ENCODE measurements at regions of chr19 and their contacts with region 1.

Region 1: DNA sequence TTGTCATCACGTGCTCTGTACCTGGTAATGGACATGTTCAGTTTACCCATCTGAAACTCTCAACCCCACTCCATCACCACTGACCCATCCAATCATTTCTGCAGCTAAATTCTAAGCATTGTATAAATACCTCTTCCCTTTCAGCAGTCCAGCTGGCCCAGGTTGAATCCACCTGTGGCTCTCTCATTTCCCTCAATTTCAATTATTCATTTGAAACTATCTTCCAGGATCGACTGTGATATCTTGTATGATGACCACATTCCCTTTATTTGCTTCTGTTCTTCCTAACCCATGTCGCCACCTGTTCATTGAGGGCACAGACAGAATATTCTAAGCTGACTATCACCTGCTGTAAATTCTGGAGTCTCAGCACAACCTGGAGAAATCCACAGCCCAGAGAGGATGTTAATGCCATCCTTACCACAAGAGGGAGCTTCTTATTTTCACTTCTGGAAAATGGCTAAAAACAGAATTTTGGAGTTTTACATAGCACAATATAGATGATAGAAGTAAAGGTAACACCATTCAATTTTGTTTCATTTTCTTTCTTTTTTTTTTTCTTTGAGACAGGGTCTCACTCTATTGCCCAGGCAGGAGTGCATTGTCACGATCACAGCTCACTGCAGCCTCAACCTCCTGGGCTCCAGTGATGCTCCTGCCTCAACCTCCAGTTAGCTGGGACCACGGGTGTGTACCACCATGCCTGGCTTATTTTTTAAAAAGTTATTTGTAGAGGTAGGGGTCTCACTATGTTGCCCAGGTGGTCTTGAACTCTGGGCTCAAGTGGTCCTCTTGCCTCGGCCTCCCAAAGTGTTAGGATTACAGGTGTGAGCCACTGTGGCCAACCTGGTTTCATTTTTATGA is 38.6 kb downstream of the ZNF823 start:
- DNase-seq: peak; percentile 12 to 43
- H3K4me3 ChIP-seq: no peak overlapping the region
- H3K27ac ChIP-seq: no peak overlapping the region
- H3K4me1 ChIP-seq: 0 out of 2 replicates have a peak, but pooled peaks cover 1% of the 10 kb centered on the region
- H3K27me3 ChIP-seq: no peaks in the 10 kb centered on the region
- CTCF ChIP-seq: peak; percentile 92

Region 2: DNA sequence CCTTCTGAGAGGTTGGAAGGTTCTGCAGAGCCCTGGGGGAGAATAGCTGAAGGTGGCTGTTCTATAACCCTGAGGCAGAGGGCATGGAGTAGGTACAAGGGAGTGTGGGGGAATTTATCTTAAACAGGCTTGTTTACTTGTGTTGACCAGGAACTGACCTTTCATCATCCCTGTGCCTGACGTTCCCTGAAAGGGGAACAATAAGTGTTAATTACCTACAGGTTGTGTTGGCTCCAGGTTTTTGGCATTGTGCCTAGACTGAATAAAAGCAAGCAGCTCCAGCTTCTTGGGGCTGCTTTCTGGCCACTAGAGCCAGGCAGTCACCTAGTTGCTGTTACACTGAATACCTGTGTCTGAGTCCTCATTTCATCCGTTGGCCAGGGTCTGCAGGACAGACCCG is 42.9 kb before region 1 on chr19:
- CTCF ChIA-PET with region 1: no interaction called
- POLR2A ChIA-PET with region 1: no interaction called
- intact Hi-C with region 1: no loop called
- DNase-seq: peak; percentile 11 to 67
- H3K4me3 ChIP-seq: no peak overlapping the region
- H3K27ac ChIP-seq: no peak overlapping the region
- H3K4me1 ChIP-seq: peaks cover 10% of the 10 kb centered on the region
- H3K27me3 ChIP-seq: no peaks in the 10 kb centered on the region
- CTCF ChIP-seq: no peak

Region 3: DNA sequence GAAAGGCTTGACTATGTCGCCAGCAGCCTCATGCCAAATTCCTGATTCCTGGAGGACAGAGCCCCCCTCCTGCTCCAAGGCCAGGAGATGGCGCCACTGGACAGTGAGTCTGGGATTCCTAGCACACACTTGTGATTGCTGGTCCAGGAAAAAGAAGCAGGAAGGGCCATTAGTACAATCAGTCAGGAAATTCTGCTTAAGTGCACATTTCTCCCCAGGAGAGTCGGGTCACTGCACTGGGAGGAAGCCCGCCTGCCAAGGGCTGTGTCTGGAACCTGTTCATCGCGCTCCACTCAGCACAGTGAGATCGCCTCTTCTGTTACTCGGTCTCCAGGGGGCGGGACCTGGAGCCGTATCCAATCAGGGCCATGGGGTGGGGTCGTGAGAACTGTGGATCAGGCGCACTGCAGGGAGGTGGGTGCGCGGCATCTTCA is 26.5 kb before region 1 on chr19:
- CTCF ChIA-PET with region 1: no interaction called
- POLR2A ChIA-PET with region 1: interaction called, 12 read pairs
- intact Hi-C with region 1: no loop called
- DNase-seq: peak in 1 of 2 experiments; percentile 28
- H3K4me3 ChIP-seq: no peak overlapping the region
- H3K27ac ChIP-seq: no peak overlapping the region
- H3K4me1 ChIP-seq: no peaks in the 10 kb centered on the region
- H3K27me3 ChIP-seq: no peaks in the 10 kb centered on the region
- CTCF ChIP-seq: peak; percentile 62

Region 4: GRCh38 chr19:11738746-11739620 is 38.8 kb after region 1 on chr19 and contains the start of gene ZNF823:
- CTCF ChIA-PET with region 1: interaction called, 5 read pairs
- POLR2A ChIA-PET with region 1: no interaction called
- intact Hi-C with region 1: loop called (anchors 5 kb)
- DNase-seq: peak; percentile 99
- H3K4me3 ChIP-seq: peak within 1 kb of the TSS; percentile 85
- H3K27ac ChIP-seq: peak within 1 kb of the TSS; percentile 89
- H3K4me1 ChIP-seq: peaks cover 31% of the 10 kb centered on the region
- H3K27me3 ChIP-seq: no peaks in the 10 kb centered on the region
- CTCF ChIP-seq: no peak
- total RNA-seq, gene ZNF823: 6.7 and 7.4 TPM in 2 replicates

Region 5: GRCh38 chr19:12085074-12085805 is 385.1 kb after region 1 on chr19:
- CTCF ChIA-PET with region 1: no interaction called
- POLR2A ChIA-PET with region 1: no interaction called
- intact Hi-C with region 1: no loop called
- DNase-seq: no peak
- H3K4me3 ChIP-seq: no peak overlapping the region
- H3K27ac ChIP-seq: no peak overlapping the region
- H3K4me1 ChIP-seq: no peaks in the 10 kb centered on the region
- H3K27me3 ChIP-seq: no peaks in the 10 kb centered on the region
- CTCF ChIP-seq: no peak

Measured in PC-9 (cell line).